Activated CD4-positive, alpha-beta memory T cell treated with anti-CD3 and anti-CD28 coated beads, Interleukin-2, amount 10 ng/mL, durations not matched to agents 7 days and 5 days (primary cell): ENCODE measurements at regions of chr19 and their contacts with region 1.

Region 1: GRCh38 chr19:35204799-35205732 is 23.5 kb downstream of the FAM187B start:
- DNase-seq: peak; percentile 27
- H3K4me3 Mint-ChIP-seq: no peak overlapping the region
- H3K27ac Mint-ChIP-seq: peak overlapping the region; percentile 97
- H3K4me1 Mint-ChIP-seq: peaks cover 73% of the 10 kb centered on the region
- H3K27me3 Mint-ChIP-seq: no peaks in the 10 kb centered on the region

Region 2: GRCh38 chr19:35090506-35091237 is 114.4 kb before region 1 on chr19:
- CTCF ChIA-PET with region 1: no interaction called
- POLR2A ChIA-PET with region 1: no interaction called
- DNase-seq: peak; percentile 28
- H3K4me3 Mint-ChIP-seq: no peak overlapping the region
- H3K27ac Mint-ChIP-seq: no peak overlapping the region
- H3K4me1 Mint-ChIP-seq: no peaks in the 10 kb centered on the region
- H3K27me3 Mint-ChIP-seq: peaks cover 5% of the 10 kb centered on the region

Region 3: GRCh38 chr19:35179830-35180229 is 25.2 kb before region 1 on chr19:
- CTCF ChIA-PET with region 1: no interaction called
- POLR2A ChIA-PET with region 1: interaction called, 15 read pairs
- DNase-seq: no peak
- H3K4me3 Mint-ChIP-seq: no peak overlapping the region
- H3K27ac Mint-ChIP-seq: no peak overlapping the region
- H3K4me1 Mint-ChIP-seq: peaks cover 25% of the 10 kb centered on the region
- H3K27me3 Mint-ChIP-seq: no peaks in the 10 kb centered on the region

Region 4: GRCh38 chr19:35269421-35270117 is 64.5 kb after region 1 on chr19:
- CTCF ChIA-PET with region 1: interaction called, 3 read pairs
- POLR2A ChIA-PET with region 1: interaction called, 12 read pairs
- DNase-seq: peak; percentile 78
- H3K4me3 Mint-ChIP-seq: peak overlapping the region; percentile 66
- H3K27ac Mint-ChIP-seq: peak overlapping the region; percentile 64
- H3K4me1 Mint-ChIP-seq: peaks cover 32% of the 10 kb centered on the region
- H3K27me3 Mint-ChIP-seq: no peaks in the 10 kb centered on the region

Region 5: GRCh38 chr19:35347171-35347929 is 142.3 kb after region 1 on chr19 and contains the start of gene FFAR1:
- CTCF ChIA-PET with region 1: no interaction called
- POLR2A ChIA-PET with region 1: no interaction called
- DNase-seq: peak; percentile 41
- H3K4me3 Mint-ChIP-seq: peak within 1 kb of the TSS; percentile 6
- H3K27ac Mint-ChIP-seq: peak within 1 kb of the TSS; percentile 55
- H3K4me1 Mint-ChIP-seq: peaks cover 26% of the 10 kb centered on the region
- H3K27me3 Mint-ChIP-seq: peaks cover 43% of the 10 kb centered on the region
- total RNA-seq, gene FFAR1: not detected